ENCODE measurements at regions of chr1 and their contacts with region 1.

Region 1: GRCh38 chr1:41919764-41920397 is 1.2 kb upstream of the HIVEP3 start:
- DNase-seq: peak; percentile 90
- ATAC-seq: peak; percentile 91
- H3K4me3 Mint-ChIP-seq: peak overlapping the region; percentile 93
- H3K27ac Mint-ChIP-seq: peak overlapping the region; percentile 98
- H3K4me1 Mint-ChIP-seq: peaks cover 54% of the 10 kb centered on the region
- H3K27me3 Mint-ChIP-seq: no peaks in the 10 kb centered on the region
- CTCF ChIP-seq: no peak

Region 2: DNA sequence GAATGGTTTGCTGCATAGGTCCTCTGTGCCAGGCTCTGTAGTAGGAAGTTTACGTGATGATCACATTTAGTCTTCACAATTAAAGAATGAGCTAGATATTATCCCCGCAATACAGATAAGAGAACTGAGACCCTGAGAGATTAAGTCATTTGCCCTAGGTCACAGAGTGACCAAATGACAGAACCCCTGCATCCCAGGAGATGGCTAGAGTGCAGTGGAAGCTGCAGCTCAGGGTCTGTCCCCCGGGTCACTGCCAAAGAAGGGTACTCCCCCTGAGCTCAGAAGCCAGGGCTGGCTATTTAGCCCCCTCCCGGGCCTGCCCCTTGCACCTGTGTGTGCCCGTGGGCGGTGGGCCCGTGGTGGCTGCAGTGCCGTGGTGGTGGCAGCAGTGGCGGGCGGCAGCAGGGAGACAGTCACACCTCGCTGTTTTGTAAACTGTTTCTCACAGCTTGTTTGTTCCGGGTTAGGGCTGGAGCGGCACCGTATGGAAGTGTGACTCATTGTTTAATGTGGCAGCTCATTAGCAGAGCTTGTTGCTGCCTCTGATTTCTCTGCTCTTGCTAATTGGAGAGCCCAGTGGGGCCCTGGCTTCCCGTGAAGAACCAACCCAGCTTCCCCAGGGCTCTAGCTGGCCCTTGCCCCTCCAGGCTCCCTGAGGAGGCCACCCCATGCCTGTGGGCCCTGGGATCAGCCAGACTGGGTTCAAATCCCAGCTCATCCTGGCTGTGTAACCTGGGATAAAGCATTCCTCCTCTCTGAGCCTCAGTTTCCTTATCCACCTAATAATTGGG is 577.9 kb before region 1 on chr1:
- CTCF ChIA-PET with region 1: no interaction called
- POLR2A ChIA-PET with region 1: no interaction called
- intact Hi-C with region 1: no loop called
- DNase-seq: no peak
- ATAC-seq: no peak
- H3K4me3 Mint-ChIP-seq: no peak overlapping the region
- H3K27ac Mint-ChIP-seq: no peak overlapping the region
- H3K4me1 Mint-ChIP-seq: peaks cover 17% of the 10 kb centered on the region
- H3K27me3 Mint-ChIP-seq: peaks cover 19% of the 10 kb centered on the region
- CTCF ChIP-seq: no peak

Region 3: GRCh38 chr1:42035830-42036604 is 116.1 kb after region 1 on chr1:
- CTCF ChIA-PET with region 1: no interaction called
- POLR2A ChIA-PET with region 1: no interaction called
- intact Hi-C with region 1: loop called (anchors 10 kb)
- DNase-seq: peak; percentile 99
- ATAC-seq: peak; percentile 95
- H3K4me3 Mint-ChIP-seq: peak overlapping the region; percentile 77
- H3K27ac Mint-ChIP-seq: peak overlapping the region; percentile 69
- H3K4me1 Mint-ChIP-seq: peaks cover 28% of the 10 kb centered on the region
- H3K27me3 Mint-ChIP-seq: no peaks in the 10 kb centered on the region
- CTCF ChIP-seq: no peak

Measured in activated CD8-positive, alpha-beta T cell treated with anti-CD3 and anti-CD28 coated beads for 36 hours (primary cell).